ENCODE measurements at regions of chr2 and their contacts with region 1.

Region 1: DNA sequence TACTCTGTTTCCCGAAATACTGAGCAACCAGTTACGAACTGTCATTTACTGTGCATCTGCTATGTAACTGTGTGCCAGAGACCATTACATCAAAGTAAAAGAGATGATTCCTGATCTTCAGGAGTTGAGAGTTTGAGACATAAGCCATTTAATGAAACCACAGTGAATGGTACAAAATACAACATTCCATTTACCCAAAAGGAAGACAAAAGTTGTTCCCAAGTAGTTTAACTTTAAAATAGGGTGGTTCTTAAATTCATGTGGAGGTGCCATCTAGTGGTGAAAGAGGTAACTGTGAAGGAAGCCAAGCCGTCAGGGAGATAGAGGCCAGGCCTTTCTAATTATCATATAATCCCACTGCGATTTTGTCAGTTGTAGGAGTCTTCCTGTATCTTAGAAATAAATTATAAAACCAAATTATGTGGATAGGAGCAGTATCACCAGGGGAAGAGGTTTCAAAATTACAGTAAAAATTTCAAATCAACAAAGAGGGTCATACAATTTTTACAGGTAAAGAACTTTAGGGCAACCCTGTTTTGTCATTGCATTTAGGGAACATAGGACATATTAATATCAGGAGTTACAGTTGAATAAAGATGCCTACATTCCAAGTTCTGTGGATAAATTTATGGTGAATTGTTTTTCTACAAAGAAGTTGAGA is 67.7 kb downstream of the EPAS1 start:
- DNase-seq: no peak
- ATAC-seq: peak; percentile 51 to 73

Region 2: DNA sequence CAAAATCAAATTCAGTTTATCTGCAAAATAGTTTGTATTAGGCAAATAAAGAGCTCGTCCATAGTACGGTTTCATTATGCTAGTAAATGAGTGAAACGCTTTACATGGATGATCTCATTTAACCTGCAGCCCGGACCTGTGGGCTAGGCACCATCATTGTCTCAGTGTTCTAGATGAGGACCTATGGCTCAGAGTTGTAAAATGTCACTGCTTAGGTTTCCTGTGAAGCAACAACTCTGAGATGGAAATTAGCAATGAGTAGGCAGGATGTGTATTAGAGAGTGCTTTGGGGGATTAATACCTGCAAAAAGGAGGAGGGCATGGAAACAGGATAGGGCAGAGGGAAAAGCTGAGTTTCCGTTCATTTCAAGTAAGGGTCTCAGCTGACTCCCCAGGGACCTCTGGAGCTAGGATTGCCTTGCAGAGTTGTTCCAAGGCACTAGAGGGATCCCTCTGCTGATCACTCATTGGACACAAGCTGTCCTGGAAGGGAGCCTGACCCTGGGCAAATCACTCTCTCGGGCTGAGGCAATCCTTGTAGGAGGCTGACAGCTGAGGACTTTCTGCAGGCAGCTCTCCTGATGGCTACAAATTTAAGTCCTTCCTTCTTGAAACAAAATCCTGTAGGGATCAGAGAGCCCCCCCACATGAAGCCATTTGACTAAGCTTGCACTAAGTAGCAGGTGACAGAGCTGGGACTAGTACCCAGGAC is 1296.9 kb before region 1 on chr2:
- intact Hi-C with region 1: no loop called
- DNase-seq: no peak
- ATAC-seq: peak in 1 of 2 donors; percentile 58

Region 3: GRCh38 chr2:45986519-45986918 is 378.4 kb before region 1 on chr2:
- intact Hi-C with region 1: no loop called
- DNase-seq: peak; percentile 47
- ATAC-seq: peak; percentile 36 to 47

Region 4: GRCh38 chr2:46010925-46011490 is 353.9 kb before region 1 on chr2:
- intact Hi-C with region 1: loop called (anchors 5 to 10 kb)
- DNase-seq: no peak
- ATAC-seq: peak in 1 of 2 donors; percentile 55

Region 5: DNA sequence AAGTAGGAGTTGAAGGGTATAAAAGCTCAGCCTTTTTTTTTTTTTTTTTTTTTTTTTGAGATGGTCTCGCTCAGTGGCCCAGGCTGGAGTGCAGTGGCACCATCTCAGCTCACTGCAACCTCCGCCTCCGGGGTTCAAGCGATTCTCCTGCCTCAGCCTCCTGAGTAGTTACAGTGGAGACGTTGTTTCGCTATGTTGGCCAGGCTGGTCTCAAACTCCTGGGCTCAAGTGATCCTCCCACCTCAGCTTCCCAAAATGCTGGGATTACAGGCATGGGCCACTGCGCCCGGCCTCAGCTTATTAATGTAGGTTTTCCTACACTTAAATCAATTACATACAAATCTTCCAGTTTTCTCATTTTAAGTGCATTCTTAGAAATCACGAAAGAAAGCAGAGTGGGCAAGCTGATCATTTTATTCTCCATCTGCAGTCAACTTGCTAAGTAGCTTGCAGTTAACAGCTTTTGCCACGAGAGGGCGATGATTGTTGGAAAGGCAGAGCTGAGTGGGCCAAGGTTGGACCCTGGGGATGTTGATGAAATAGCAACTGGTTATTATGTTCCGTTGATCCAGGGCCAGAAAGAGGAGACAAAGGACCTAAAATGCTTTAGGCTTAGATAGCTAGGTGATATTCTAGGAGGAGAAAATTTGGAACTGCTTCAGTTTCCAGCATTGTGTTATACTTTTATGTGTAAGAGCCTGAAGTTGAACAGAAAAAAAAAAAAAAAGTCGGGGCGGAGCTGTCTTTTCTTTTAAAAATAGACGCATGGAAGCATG is 302.1 kb before region 1 on chr2:
- intact Hi-C with region 1: loop called in 1 of 2 experiments (anchors 10 kb)
- DNase-seq: peak; percentile 89
- ATAC-seq: peak; percentile 81 to 86

Region 6: DNA sequence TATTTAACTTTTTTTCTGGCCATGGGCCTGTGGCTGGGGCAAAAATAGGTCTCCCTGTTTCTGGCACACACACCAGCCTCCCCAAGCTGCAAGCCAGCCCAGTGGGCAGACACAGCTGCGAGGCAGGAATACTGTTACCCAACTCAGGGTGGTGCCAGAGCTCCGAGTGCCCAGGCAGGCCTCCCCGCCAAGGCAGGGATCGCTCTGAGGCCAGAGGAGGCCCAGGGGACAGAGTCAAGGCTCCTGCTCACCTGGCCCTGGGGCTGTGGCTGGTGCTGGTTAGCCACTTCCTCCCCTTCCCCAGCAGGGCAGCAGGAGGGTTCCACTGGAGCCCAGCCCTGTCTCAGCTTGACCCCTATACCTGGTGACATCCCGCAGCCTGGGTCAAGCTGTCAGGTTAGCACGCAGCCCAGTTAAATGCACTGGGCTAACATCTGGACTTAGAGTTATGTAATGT is 134.8 kb before region 1 on chr2:
- intact Hi-C with region 1: loop called in 1 of 2 experiments (anchors 5 kb)
- DNase-seq: no peak
- ATAC-seq: peak; percentile 65 to 90